CD4-positive, alpha-beta T cell (primary cell): ENCODE measurements at regions of chr14 and their contacts with region 1.

Region 1: GRCh38 chr14:80996049-80996901 is 40.9 kb downstream of the TSHR start:
- DNase-seq: peak in 6 of 14 experiments; percentile 11 to 68 (median 40)
- ATAC-seq: peak; percentile 69
- H3K4me3 ChIP-seq: no peak overlapping the region
- H3K4me3 Mint-ChIP-seq: no peak overlapping the region
- H3K27ac ChIP-seq: no peak overlapping the region
- H3K27ac Mint-ChIP-seq: no peak overlapping the region
- H3K4me1 ChIP-seq: no peaks in the 10 kb centered on the region
- H3K4me1 Mint-ChIP-seq: no peaks in the 10 kb centered on the region
- H3K27me3 ChIP-seq: peaks cover 0 to 5% of the 10 kb centered on the region in 2 experiments
- H3K27me3 Mint-ChIP-seq: peaks cover 34% of the 10 kb centered on the region
- CTCF ChIP-seq: peak; percentile 62

Region 2: DNA sequence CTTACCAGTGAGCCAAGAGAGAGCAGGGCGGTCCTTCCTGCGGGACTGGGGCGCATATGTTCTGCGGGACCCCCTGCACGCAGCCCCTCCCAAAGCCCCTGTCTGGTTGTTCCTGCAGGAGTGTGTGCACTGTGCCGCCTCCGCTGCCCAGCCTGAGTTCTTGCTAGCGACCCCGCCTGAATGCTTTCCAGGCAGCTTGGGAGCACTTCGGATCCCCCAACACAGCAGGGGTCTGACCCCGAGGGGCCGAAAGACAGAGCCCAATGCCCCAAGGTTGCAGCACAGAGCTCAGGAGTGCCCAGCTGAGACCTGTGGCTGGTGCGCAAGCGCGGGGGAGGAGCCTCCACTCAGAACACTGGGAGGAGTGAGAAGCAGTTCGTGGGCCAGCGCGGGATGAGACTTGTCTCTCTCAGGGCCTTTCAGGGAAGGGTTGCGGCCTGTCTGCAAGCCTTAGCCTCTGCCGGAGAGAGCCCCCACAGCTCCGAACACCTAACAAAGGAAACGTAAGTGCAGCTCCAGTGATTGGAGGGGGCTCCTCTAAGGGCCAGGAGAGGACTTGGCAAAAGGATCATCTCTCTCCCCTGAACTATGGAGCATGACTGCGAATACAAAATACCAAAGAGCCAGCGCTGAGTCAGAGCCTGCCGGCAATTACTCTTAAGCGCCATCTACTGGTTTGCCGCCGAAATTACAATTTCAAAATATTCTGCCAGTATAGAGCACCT is 174.0 kb after region 1 on chr14:
- CTCF ChIA-PET with region 1: no interaction called
- POLR2A ChIA-PET with region 1: interaction called, 10 read pairs
- intact Hi-C with region 1: loop called (anchors 1 to 2 kb)
- DNase-seq: peak; percentile 79 to 93 (median 86)
- ATAC-seq: peak; percentile 97
- H3K4me3 ChIP-seq: peak overlapping the region; percentile 82
- H3K4me3 Mint-ChIP-seq: peak overlapping the region; percentile 88
- H3K27ac ChIP-seq: peak overlapping the region; percentile 58 to 72
- H3K27ac Mint-ChIP-seq: peak overlapping the region; percentile 94
- H3K4me1 ChIP-seq: peaks cover 20% of the 10 kb centered on the region
- H3K4me1 Mint-ChIP-seq: peaks cover 28% of the 10 kb centered on the region
- H3K27me3 ChIP-seq: no peaks in the 10 kb centered on the region
- H3K27me3 Mint-ChIP-seq: no peaks in the 10 kb centered on the region
- CTCF ChIP-seq: peak; percentile 86

Region 3: DNA sequence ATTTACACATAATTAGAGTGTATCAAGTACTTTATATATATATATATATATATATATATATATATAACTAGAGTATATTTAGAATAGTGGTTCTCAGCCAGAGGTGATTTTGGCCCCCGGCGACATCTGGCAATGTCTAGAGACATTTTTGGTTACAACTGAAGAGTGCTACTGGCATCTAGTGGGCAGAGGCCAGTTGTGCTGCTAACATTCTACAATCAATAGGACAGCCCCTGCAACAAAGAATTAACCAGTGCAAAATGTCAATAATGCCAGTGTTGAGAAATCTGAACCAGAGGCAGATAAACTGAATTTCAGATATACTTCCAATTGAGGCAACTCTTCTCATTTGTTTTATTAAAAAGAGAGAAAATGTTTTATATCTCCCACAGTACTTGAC is 215.6 kb after region 1 on chr14:
- CTCF ChIA-PET with region 1: no interaction called
- POLR2A ChIA-PET with region 1: no interaction called
- intact Hi-C with region 1: loop called (anchors 1 to 2 kb)
- DNase-seq: peak in 8 of 14 experiments; percentile 15 to 69 (median 27)
- ATAC-seq: peak; percentile 80
- H3K4me3 ChIP-seq: no peak overlapping the region
- H3K4me3 Mint-ChIP-seq: no peak overlapping the region
- H3K27ac ChIP-seq: no peak overlapping the region
- H3K27ac Mint-ChIP-seq: no peak overlapping the region
- H3K4me1 ChIP-seq: peaks cover 9% of the 10 kb centered on the region
- H3K4me1 Mint-ChIP-seq: peaks cover 63% of the 10 kb centered on the region
- H3K27me3 ChIP-seq: no peaks in the 10 kb centered on the region
- H3K27me3 Mint-ChIP-seq: no peaks in the 10 kb centered on the region
- CTCF ChIP-seq: peak; percentile 46

Region 4: DNA sequence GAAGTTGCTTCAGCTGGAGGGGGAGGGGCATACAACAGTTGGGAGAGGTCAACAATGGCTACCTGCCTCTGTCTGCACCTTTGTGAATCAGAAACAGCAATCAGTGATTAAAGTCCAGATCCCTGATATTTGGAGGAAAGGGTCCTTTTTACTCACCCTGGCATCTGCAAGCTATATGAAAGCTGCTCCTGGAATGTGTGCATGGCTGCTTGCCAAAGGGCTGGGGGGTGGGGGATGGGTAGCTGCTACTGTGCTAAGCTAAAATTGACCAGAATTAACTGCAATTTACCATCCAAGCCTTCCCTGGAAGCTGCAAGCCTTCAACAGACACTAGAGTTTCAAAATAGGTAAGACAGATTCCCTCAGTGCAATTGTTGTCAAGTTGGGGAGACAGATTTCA is 238.0 kb after region 1 on chr14:
- CTCF ChIA-PET with region 1: no interaction called
- POLR2A ChIA-PET with region 1: no interaction called
- intact Hi-C with region 1: loop called in 1 of 2 experiments (anchors 10 kb)
- DNase-seq: no peak
- ATAC-seq: no peak
- H3K4me3 ChIP-seq: no peak overlapping the region
- H3K4me3 Mint-ChIP-seq: no peak overlapping the region
- H3K27ac ChIP-seq: no peak overlapping the region
- H3K27ac Mint-ChIP-seq: no peak overlapping the region
- H3K4me1 ChIP-seq: no peaks in the 10 kb centered on the region
- H3K4me1 Mint-ChIP-seq: no peaks in the 10 kb centered on the region
- H3K27me3 ChIP-seq: no peaks in the 10 kb centered on the region
- H3K27me3 Mint-ChIP-seq: no peaks in the 10 kb centered on the region
- CTCF ChIP-seq: no peak

Region 5: DNA sequence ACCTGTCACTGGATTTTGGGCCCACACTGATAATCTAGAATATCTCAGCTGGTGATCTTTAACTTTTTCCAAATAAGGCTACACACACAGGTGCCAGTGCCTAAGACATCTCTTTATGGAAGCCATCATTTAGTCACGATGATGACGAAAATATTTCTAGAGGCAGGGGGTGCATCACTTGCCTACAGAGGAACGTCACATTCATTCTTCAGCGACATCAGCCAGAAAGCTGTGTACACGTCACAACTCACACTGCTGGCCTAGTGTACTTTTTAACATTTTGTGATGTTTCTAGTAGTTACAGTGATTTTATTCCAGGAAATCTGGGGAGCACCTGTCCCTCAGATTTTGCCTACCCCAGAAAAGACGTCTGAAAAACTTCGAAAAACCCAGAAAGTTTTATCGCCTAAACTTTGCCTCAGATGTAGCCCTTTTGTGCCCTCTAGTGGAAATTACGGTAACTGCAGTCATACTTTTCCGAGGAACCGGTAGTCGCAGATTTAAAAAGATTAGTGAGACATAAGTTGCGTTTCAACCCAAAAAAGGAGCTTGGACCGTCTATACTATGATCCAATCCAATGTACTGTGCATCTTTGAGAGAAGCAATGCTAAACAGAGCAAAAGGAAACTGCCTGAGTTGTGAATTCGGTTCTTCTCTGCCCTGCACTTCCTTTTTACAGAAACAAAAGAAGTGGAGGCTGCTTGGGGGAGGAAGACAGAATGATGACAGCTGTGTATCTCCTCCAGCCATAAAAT is 468.1 kb after region 1 on chr14:
- CTCF ChIA-PET with region 1: no interaction called
- POLR2A ChIA-PET with region 1: no interaction called
- intact Hi-C with region 1: loop called (anchors 1 to 5 kb)
- DNase-seq: peak in 13 of 14 experiments; percentile 10 to 86 (median 47)
- ATAC-seq: peak; percentile 80
- H3K4me3 ChIP-seq: peak overlapping the region; percentile 66
- H3K4me3 Mint-ChIP-seq: peak overlapping the region; percentile 86
- H3K27ac ChIP-seq: peak overlapping the region in 1 of 2 donors; percentile 36
- H3K27ac Mint-ChIP-seq: peak overlapping the region; percentile 86
- H3K4me1 ChIP-seq: peaks cover 4% of the 10 kb centered on the region
- H3K4me1 Mint-ChIP-seq: peaks cover 8% of the 10 kb centered on the region
- H3K27me3 ChIP-seq: no peaks in the 10 kb centered on the region
- H3K27me3 Mint-ChIP-seq: no peaks in the 10 kb centered on the region
- CTCF ChIP-seq: peak; percentile 93